CD4-positive, alpha-beta T cell (primary cell): ENCODE measurements at regions of chr4 and their contacts with region 1.

Region 1: DNA sequence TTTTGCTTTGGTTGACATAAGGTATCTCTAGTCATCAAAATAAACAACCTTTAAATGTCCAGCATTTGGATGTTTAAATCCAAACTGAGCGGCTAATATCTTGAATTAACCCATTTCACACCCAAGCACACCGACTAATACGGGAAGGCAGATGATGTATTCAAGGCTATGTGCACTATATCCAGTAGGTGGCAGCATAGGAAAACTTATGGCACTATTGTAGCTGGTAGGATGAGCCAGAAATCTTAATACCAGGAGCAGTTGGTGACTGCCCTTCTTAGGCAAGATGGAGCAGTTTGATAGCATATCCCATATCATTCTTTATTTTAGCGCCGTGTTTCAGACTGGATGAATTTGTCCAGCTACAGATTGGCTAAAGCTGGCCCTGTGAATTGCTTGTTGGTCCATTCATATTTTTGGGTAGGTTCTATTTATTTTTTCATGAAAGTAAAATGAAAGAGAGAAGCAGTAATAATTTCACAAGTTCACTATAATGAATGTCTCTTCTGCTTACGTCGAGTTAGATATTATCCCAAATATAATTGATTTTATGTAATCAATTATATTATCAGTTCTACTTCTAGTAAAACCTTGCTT is 24.4 kb downstream of the UCHL1 start:
- DNase-seq: peak in 4 of 14 experiments; percentile 21 to 71 (median 60)
- ATAC-seq: peak; percentile 52
- H3K4me3 ChIP-seq: no peak overlapping the region
- H3K4me3 Mint-ChIP-seq: no peak overlapping the region
- H3K27ac ChIP-seq: no peak overlapping the region
- H3K27ac Mint-ChIP-seq: no peak overlapping the region
- H3K4me1 ChIP-seq: no peaks in the 10 kb centered on the region
- H3K4me1 Mint-ChIP-seq: no peaks in the 10 kb centered on the region
- H3K27me3 ChIP-seq: no peaks in the 10 kb centered on the region
- H3K27me3 Mint-ChIP-seq: peaks cover 28% of the 10 kb centered on the region
- CTCF ChIP-seq: peak; percentile 88

Region 2: DNA sequence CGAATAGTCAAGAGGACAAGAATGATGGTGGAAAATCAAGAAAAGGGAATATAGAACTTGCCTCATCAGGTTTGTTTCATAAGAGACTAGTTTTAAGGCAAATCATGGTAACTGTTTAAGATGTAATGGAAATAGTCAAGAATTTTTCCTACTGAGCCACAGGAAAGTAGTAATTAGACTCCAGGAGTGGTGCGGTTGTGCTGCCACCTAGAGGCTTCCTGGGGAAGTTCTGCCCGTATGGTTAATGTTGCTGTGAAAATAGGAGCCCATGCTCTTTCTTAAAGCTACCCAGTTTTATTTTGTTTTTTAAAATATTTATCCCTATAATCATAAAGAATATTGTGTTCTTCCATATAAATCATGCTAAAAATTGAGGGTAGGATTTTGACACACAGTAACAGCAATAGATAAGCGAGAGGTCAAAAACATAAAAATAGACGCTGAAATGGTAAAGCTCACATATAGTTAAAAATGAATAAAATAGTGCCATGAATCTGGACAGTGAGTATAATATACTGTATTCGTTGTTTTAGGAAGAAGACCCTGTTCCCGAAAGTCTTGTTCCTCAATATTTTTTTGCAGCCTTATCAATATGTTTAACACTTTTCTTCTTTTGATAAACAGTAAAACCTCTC is 380.4 kb after region 1 on chr4:
- CTCF ChIA-PET with region 1: interaction called, 3 read pairs
- POLR2A ChIA-PET with region 1: no interaction called
- intact Hi-C with region 1: loop called (anchors 2 kb)
- DNase-seq: peak in 10 of 14 experiments; percentile 1 to 44 (median 13)
- ATAC-seq: no peak
- H3K4me3 ChIP-seq: no peak overlapping the region
- H3K4me3 Mint-ChIP-seq: no peak overlapping the region
- H3K27ac ChIP-seq: no peak overlapping the region
- H3K27ac Mint-ChIP-seq: no peak overlapping the region
- H3K4me1 ChIP-seq: no peaks in the 10 kb centered on the region
- H3K4me1 Mint-ChIP-seq: no peaks in the 10 kb centered on the region
- H3K27me3 ChIP-seq: peaks cover 0 to 5% of the 10 kb centered on the region in 2 experiments
- H3K27me3 Mint-ChIP-seq: peaks cover 21% of the 10 kb centered on the region
- CTCF ChIP-seq: peak; percentile 83

Region 3: DNA sequence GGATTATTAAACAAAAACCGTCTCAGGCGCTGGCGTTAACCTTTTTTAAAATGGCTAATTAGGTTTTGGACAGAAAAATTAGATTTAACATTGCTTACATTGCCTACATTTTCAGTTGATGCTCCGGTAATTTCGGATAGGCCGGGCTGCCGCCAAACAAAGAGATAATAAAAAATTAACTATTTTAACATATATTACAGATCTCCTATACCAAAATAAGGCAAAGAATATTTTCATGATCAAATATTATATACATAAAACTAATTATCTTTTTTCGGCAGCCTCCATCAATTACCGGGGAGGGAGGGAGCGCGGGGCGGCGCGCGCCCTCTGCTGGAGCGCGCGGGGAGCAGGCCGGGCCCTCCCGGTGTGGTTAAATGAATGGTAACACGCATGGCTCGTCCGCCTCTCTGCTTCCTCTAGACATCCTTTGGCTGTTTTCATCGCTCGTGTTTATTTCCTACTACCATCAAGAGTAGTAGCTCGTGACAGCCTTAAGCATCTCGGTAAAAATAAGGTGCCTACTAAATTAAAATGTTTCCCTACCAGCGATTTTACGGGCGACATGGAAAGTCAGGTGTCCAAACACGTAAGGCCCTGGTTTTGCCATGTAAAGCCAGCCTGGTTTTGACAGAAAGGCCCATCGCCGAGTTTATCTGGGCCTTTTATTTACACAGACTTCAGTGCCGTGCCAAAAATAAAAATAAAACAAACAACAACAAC is 601.6 kb after region 1 on chr4:
- CTCF ChIA-PET with region 1: interaction called, 6 read pairs
- POLR2A ChIA-PET with region 1: no interaction called
- intact Hi-C with region 1: loop called (anchors 1 to 2 kb)
- DNase-seq: peak in 13 of 14 experiments; percentile 31 to 72 (median 46)
- ATAC-seq: peak; percentile 86
- H3K4me3 ChIP-seq: peak overlapping the region; percentile 51
- H3K4me3 Mint-ChIP-seq: peak overlapping the region; percentile 60
- H3K27ac ChIP-seq: no peak overlapping the region
- H3K27ac Mint-ChIP-seq: no peak overlapping the region
- H3K4me1 ChIP-seq: peaks cover 31% of the 10 kb centered on the region
- H3K4me1 Mint-ChIP-seq: peaks cover 30% of the 10 kb centered on the region
- H3K27me3 ChIP-seq: peaks cover 52 to 69% of the 10 kb centered on the region in 2 experiments
- H3K27me3 Mint-ChIP-seq: peaks cover 91% of the 10 kb centered on the region
- CTCF ChIP-seq: peak; percentile 92

Region 4: GRCh38 chr4:41887821-41888686 is 606.9 kb after region 1 on chr4:
- CTCF ChIA-PET with region 1: interaction called, 6 read pairs
- POLR2A ChIA-PET with region 1: no interaction called
- intact Hi-C with region 1: loop called (anchors 1 to 2 kb)
- DNase-seq: peak in 7 of 14 experiments; percentile 15 to 65 (median 35)
- ATAC-seq: no peak
- H3K4me3 ChIP-seq: no peak overlapping the region
- H3K4me3 Mint-ChIP-seq: no peak overlapping the region
- H3K27ac ChIP-seq: no peak overlapping the region
- H3K27ac Mint-ChIP-seq: no peak overlapping the region
- H3K4me1 ChIP-seq: peaks cover 1% of the 10 kb centered on the region
- H3K4me1 Mint-ChIP-seq: peaks cover 2% of the 10 kb centered on the region
- H3K27me3 ChIP-seq: peaks cover 6 to 31% of the 10 kb centered on the region in 2 experiments
- H3K27me3 Mint-ChIP-seq: peaks cover 77% of the 10 kb centered on the region
- CTCF ChIP-seq: peak; percentile 90

Region 5: GRCh38 chr4:41949531-41949930 is 668.4 kb after region 1 on chr4:
- CTCF ChIA-PET with region 1: no interaction called
- POLR2A ChIA-PET with region 1: no interaction called
- intact Hi-C with region 1: no loop called
- DNase-seq: no peak
- ATAC-seq: no peak
- H3K4me3 ChIP-seq: no peak overlapping the region
- H3K4me3 Mint-ChIP-seq: no peak overlapping the region
- H3K27ac ChIP-seq: no peak overlapping the region
- H3K27ac Mint-ChIP-seq: no peak overlapping the region
- H3K4me1 ChIP-seq: no peaks in the 10 kb centered on the region
- H3K4me1 Mint-ChIP-seq: peaks cover 10% of the 10 kb centered on the region
- H3K27me3 ChIP-seq: no peaks in the 10 kb centered on the region
- H3K27me3 Mint-ChIP-seq: no peaks in the 10 kb centered on the region
- CTCF ChIP-seq: no peak

Region 6: GRCh38 chr4:42519803-42520417 is 1238.8 kb after region 1 on chr4:
- CTCF ChIA-PET with region 1: interaction called, 4 read pairs
- POLR2A ChIA-PET with region 1: no interaction called
- intact Hi-C with region 1: loop called in 1 of 2 experiments (anchors 5 kb)
- DNase-seq: peak in 11 of 14 experiments; percentile 3 to 65 (median 17)
- ATAC-seq: peak; percentile 52
- H3K4me3 ChIP-seq: no peak overlapping the region
- H3K4me3 Mint-ChIP-seq: no peak overlapping the region
- H3K27ac ChIP-seq: no peak overlapping the region
- H3K27ac Mint-ChIP-seq: no peak overlapping the region
- H3K4me1 ChIP-seq: no peaks in the 10 kb centered on the region
- H3K4me1 Mint-ChIP-seq: no peaks in the 10 kb centered on the region
- H3K27me3 ChIP-seq: no peaks in the 10 kb centered on the region
- H3K27me3 Mint-ChIP-seq: no peaks in the 10 kb centered on the region
- CTCF ChIP-seq: peak; percentile 79